MCF 10A (cell line): ENCODE measurements at regions of chr2 and their contacts with region 1.

Region 1: GRCh38 chr2:27086090-27086723 is 365 bp upstream of the KHK start:
- DNase-seq: peak; percentile 92
- H3K4me3 Mint-ChIP-seq: peak overlapping the region; percentile 75
- H3K27ac Mint-ChIP-seq: no peak overlapping the region
- H3K4me1 Mint-ChIP-seq: peaks cover 5% of the 10 kb centered on the region
- H3K27me3 Mint-ChIP-seq: no peaks in the 10 kb centered on the region
- CTCF ChIP-seq: peak; percentile 87

Region 2: DNA sequence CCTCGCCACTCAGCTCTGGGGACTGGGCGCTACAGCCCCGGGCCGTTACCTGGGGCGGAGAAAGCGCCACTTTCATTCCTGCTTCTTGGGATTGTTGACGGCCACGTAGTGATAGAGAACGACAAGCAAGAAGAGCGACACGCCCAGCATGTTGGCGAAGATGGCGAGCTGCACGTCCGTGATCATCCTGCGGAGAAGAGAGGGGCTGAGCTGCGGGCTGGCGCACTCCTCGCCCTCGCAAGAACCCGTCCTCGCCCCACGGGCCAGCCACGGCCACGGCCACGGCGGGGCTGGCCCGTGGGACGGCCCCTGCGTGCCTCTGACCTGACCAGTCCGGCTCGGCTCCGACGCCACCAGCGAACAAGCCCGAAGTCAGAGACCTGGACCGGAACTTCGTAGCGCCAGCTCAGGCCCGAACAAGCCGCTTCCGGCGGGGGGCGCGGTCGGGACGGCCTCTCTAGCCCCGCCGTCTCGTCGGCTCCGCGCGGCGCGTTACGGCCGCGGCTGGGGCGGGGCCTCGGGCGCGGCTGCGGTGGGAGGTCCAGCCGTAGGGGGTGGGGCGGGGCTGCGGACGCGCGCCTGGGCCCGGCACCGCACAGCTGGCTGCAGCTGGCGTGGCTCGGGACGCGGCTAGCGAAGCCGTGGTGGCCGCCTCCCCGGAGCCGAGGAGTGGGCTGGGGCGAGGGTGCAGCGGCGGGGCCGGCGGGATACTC is 14.8 kb before region 1 on chr2 and contains the start of gene OST4:
- CTCF ChIA-PET with region 1: interaction called, 10 read pairs
- POLR2A ChIA-PET with region 1: interaction called, 18 read pairs
- intact Hi-C with region 1: no loop called
- DNase-seq: peak; percentile 92
- H3K4me3 Mint-ChIP-seq: peak within 1 kb of the TSS; percentile 92
- H3K27ac Mint-ChIP-seq: peak within 1 kb of the TSS; percentile 93
- H3K4me1 Mint-ChIP-seq: peaks cover 10% of the 10 kb centered on the region
- H3K27me3 Mint-ChIP-seq: peaks cover 8% of the 10 kb centered on the region
- CTCF ChIP-seq: no peak
- total RNA-seq, gene OST4: 257 and 340 TPM in 2 replicates

Region 3: DNA sequence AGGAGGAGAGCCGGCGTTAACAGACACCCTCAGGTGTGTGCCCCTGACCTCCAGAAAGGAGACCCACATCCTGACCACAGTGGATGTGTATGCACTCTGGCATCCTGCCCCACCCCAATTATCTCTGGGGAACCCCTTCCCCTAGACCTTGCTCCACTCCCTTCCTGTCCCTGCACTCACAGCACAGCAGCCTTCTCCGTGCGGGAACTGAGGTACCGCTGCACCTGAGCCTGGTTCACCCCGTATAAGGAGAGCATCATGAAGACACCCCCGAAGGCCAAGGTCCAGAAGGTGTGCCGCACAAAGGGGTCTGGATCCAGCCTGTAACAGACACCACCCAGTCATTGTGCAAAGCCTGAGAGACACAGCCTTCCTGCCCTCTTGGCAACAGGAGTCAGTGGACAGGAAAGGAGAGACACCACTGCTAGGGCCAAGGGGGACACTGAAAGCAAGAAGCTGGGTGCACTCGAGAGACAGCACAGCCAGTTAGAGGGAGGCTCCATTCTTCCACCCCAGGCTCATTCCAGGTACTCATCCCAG is 118.5 kb after region 1 on chr2:
- CTCF ChIA-PET with region 1: no interaction called
- POLR2A ChIA-PET with region 1: no interaction called
- intact Hi-C with region 1: no loop called
- DNase-seq: no peak
- H3K4me3 Mint-ChIP-seq: no peak overlapping the region
- H3K27ac Mint-ChIP-seq: no peak overlapping the region
- H3K4me1 Mint-ChIP-seq: peaks cover 6% of the 10 kb centered on the region
- H3K27me3 Mint-ChIP-seq: no peaks in the 10 kb centered on the region
- CTCF ChIP-seq: no peak